T-cell (primary cell): ENCODE measurements at regions of chr6 and their contacts with region 1.

Region 1: DNA sequence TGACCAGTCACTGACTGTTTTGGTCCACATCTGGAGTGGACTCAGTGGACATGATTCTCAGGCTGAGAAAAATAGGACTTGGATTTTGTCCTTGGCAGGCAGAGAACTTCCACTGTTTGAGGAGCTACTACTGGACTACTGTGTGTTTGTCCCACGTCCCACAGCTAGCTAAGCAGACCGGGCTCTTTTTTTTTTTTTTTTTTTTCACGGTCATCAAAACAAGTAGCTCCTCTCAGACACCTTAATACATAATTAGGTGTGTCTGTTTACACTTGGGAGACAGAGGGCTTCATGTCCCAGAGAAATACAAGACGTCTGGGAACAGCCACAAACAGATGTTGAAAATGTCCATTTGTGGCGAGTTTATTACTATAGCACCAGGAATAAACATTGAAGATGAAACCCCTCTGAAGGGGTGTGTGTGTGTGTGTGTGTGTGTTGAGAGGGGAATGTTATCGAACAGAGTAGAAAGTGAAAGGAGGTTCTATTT is 155.0 kb upstream of the SUPT3H start:
- DNase-seq: no peak
- ATAC-seq: no peak
- H3K4me3 ChIP-seq: no peak overlapping the region
- H3K4me3 Mint-ChIP-seq: no peak overlapping the region
- H3K27ac ChIP-seq: no peak overlapping the region
- H3K27ac Mint-ChIP-seq: no peak overlapping the region
- H3K4me1 ChIP-seq: no peaks in the 10 kb centered on the region
- H3K4me1 Mint-ChIP-seq: peaks cover 0 to 9% (median 6%) of the 10 kb centered on the region in 3 donors
- H3K27me3 ChIP-seq: no peaks in the 10 kb centered on the region
- H3K27me3 Mint-ChIP-seq: no peaks in the 10 kb centered on the region

Region 2: GRCh38 chr6:45138765-45139164 is 394.0 kb before region 1 on chr6:
- CTCF ChIA-PET with region 1: interaction called in 1 of 2 experiments, 11 read pairs
- POLR2A ChIA-PET with region 1: no interaction called
- DNase-seq: no peak
- ATAC-seq: no peak
- H3K4me3 ChIP-seq: no peak overlapping the region
- H3K4me3 Mint-ChIP-seq: no peak overlapping the region
- H3K27ac ChIP-seq: no peak overlapping the region
- H3K27ac Mint-ChIP-seq: no peak overlapping the region
- H3K4me1 ChIP-seq: no peaks in the 10 kb centered on the region
- H3K4me1 Mint-ChIP-seq: peaks cover 0 to 4% (median 0%) of the 10 kb centered on the region in 3 donors
- H3K27me3 ChIP-seq: no peaks in the 10 kb centered on the region
- H3K27me3 Mint-ChIP-seq: no peaks in the 10 kb centered on the region

Region 3: GRCh38 chr6:45436544-45437438 is 96.0 kb before region 1 on chr6:
- CTCF ChIA-PET with region 1: no interaction called
- POLR2A ChIA-PET with region 1: interaction called in 1 of 2 experiments, 10 read pairs
- DNase-seq: peak in 1 of 35 experiments; percentile 43
- ATAC-seq: peak; percentile 71 to 83 (median 78)
- H3K4me3 ChIP-seq: no peak overlapping the region
- H3K4me3 Mint-ChIP-seq: peak overlapping the region in 2 of 3 donors; percentile 14 to 34
- H3K27ac ChIP-seq: peak overlapping the region; percentile 30
- H3K27ac Mint-ChIP-seq: peak overlapping the region; percentile 26 to 77
- H3K4me1 ChIP-seq: peaks cover 13 to 26% of the 10 kb centered on the region in 2 experiments
- H3K4me1 Mint-ChIP-seq: peaks cover 55 to 78% (median 76%) of the 10 kb centered on the region in 3 donors
- H3K27me3 ChIP-seq: no peaks in the 10 kb centered on the region
- H3K27me3 Mint-ChIP-seq: peaks cover 0 to 3% of the 10 kb centered on the region in 2 donors